ENCODE measurements at regions of chr19 and their contacts with region 1.

Region 1: DNA sequence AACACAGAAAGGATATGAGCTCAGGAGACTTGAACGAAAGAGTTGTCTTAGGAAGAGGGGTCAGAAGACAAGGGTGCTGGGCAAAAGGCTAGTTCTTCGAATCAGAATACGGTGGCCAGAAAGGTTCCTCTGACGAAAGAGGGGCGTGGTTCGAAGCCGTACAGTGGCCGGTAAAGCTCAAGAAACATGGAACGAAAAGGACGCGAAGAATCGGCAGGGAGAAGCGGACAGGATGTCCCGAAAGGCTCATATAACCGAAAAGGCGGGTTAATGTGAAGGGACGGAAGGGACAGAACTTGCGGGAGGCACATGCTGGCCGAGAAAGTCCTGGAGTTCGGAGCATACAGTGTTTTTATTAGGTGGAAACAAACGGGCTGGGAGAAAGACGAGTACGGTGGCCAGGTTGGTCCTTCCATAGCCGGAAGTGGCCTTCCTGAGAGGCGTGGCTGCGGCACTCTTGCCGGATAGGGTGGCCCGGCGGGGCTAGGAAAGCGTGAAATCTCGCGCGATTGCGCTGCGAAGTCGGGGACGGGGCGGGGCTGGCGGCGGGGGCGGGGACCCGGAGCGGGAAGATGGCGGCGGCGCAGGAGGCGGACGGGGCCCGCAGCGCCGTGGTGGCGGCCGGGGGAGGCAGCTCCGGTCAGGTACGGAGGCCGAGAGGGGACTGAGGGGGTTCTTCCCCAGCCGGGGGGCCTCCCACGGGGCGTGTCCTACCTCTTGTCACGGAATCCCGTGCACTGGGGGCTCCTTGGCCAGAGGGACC is at the start of gene CLPTM1:
- DNase-seq: peak; percentile 97 to 99
- ATAC-seq: peak; percentile 96 to 98 (median 96)
- H3K4me3 ChIP-seq: peak within 1 kb of the TSS; percentile 78
- H3K27ac ChIP-seq: peak within 1 kb of the TSS; percentile 97
- H3K4me1 ChIP-seq: peaks cover 41% of the 10 kb centered on the region
- H3K27me3 ChIP-seq: no peaks in the 10 kb centered on the region
- CTCF ChIP-seq: no peak
- total RNA-seq, gene CLPTM1: 78.4 to 98.7 (median 84.8) TPM

Region 2: DNA sequence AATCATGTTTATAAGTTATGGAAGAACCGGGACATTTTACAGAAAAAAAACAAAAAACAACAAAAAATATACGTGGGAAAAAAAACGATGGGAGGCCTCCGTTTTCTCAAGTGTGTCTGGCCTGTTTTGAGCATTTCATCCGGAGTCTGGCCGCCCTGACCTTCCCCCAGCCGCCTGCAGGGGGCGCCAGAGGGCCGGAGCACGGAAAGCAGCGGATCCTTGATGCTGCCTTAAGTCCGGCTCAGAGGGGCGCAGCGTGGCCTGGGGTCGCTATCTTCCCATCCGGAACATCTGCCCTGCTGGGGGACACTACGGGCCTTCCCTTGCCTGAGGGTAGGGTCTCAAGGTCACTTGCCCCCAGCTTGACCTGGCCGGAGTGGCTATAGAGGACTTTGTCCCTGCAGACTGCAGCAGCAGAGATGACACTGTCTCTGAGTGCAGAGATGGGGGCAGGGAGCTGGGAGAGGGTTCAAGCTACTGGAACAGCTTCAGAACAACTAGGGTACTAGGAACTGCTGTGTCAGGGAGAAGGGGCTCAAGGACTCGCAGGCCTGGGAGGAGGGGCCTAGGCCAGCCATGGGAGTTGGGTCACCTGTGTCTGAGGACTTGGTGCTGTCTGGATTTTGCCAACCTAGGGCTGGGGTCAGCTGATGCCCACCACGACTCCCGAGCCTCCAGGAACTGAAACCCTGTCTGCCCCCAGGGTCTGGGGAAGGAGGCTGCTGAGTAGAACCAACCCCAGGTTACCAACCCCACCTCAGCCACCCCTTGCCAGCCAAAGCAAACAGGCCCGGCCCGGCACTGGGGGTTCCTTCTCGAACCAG is 51.2 kb before region 1 on chr19:
- intact Hi-C with region 1: loop called (anchors 1 to 2 kb)
- DNase-seq: peak; percentile 75 to 84
- ATAC-seq: peak; percentile 63 to 88 (median 80)
- H3K4me3 ChIP-seq: no peak overlapping the region
- H3K27ac ChIP-seq: no peak overlapping the region
- H3K4me1 ChIP-seq: no peaks in the 10 kb centered on the region
- H3K27me3 ChIP-seq: peaks cover 0 to 29% (median 16%) of the 10 kb centered on the region in 3 donors
- CTCF ChIP-seq: peak; percentile 99

Region 3: GRCh38 chr19:45001087-45001739 is 46.2 kb after region 1 on chr19 and contains the start of gene RELB:
- intact Hi-C with region 1: loop called in 1 of 2 experiments (anchors 2 kb)
- DNase-seq: peak; percentile 98
- ATAC-seq: peak; percentile 64 to 76 (median 70)
- H3K4me3 ChIP-seq: peak within 1 kb of the TSS; percentile 83
- H3K27ac ChIP-seq: peak within 1 kb of the TSS; percentile 99
- H3K4me1 ChIP-seq: peaks cover 4% of the 10 kb centered on the region
- H3K27me3 ChIP-seq: no peaks in the 10 kb centered on the region
- CTCF ChIP-seq: no peak
- total RNA-seq, gene RELB: 6.5 to 44.0 (median 13.5) TPM

Region 4: GRCh38 chr19:45152504-45153338 is 197.7 kb after region 1 on chr19:
- intact Hi-C with region 1: no loop called
- DNase-seq: peak; percentile 45 to 67
- ATAC-seq: peak; percentile 49 to 73 (median 70)
- H3K4me3 ChIP-seq: peak overlapping the region; percentile 56
- H3K27ac ChIP-seq: no peak overlapping the region
- H3K4me1 ChIP-seq: peaks cover 20% of the 10 kb centered on the region
- H3K27me3 ChIP-seq: peaks cover 0 to 32% (median 10%) of the 10 kb centered on the region in 3 donors
- CTCF ChIP-seq: no peak